HCT116 (cell line): ENCODE measurements at regions of chrX and their contacts with region 1.

Region 1: GRCh38 chrX:103686199-103687072 is at the start of gene MORF4L2:
- DNase-seq: peak; percentile 95
- ATAC-seq: peak; percentile 87
- H3K4me3 ChIP-seq: peak within 1 kb of the TSS; percentile 77 to 80
- H3K27ac ChIP-seq: peak within 1 kb of the TSS; percentile 94
- H3K4me1 ChIP-seq: peaks cover 2 to 17% of the 10 kb centered on the region in 2 experiments; a peak in 3 of 4 replicates
- H3K27me3 ChIP-seq: no peaks in the 10 kb centered on the region
- CTCF ChIP-seq: no peak
- POLR2A ChIP-seq: peak; percentile 65
- RAD21 ChIP-seq: no peak
- total RNA-seq, gene MORF4L2: 308 TPM

Region 2: DNA sequence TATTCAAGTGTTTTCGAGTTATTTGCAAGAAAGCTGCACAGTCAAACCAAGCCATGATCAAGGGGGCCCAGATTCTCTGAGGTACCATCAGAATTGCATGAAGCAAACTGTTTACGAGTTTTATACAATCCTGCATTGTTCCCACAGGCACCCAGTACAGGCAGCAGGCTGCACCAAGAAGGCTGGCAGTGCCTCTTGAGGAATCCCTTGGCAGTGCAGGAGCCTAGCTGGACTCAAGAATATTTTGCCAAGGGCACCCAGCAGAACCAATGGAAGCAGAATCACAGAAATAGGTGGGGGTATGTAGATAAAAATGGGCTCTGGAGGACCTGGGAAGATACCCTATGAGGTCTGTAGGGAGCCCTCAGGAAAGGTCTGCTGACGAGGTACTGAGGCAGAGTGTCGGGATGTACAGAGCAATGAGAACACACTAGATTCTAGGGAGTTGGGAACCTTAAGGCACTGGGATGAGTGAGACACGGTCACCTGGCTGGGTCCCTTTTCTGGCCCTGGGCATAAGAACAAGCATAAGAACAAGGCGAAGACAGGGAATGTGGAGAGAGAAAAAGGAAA is 87.7 kb after region 1 on chrX:
- CTCF ChIA-PET with region 1: no interaction called
- POLR2A ChIA-PET with region 1: no interaction called
- RAD21 ChIA-PET with region 1: no interaction called
- intact Hi-C with region 1: loop called (anchors 1 kb)
- DNase-seq: peak; percentile 8
- ATAC-seq: peak; percentile 86
- H3K4me3 ChIP-seq: no peak overlapping the region
- H3K27ac ChIP-seq: no peak overlapping the region
- H3K4me1 ChIP-seq: no peaks in the 10 kb centered on the region
- H3K27me3 ChIP-seq: peaks cover 18% of the 10 kb centered on the region; the same call in 1 of the 2 replicates
- CTCF ChIP-seq: peak; percentile 42 to 52 (median 48); a peak in 4 of 6 replicates
- POLR2A ChIP-seq: no peak
- RAD21 ChIP-seq: peak; percentile 59

Region 3: DNA sequence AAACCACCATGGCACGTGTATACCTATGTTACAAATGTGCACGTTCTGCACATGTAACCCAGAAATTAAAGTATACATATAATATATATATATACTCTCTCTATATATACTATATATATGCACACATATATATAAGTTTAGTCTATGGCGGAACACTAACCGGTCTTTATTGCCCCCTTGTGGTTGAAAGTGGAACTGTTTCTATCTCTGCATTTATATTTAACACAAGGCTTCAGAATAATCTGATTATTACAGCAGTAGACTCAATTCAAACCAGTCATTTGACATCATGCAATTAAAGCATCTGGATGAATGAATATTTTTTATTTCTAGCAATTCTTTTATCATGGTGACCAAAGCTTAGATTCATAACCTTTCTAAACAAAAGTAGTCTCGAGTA is 131.1 kb after region 1 on chrX:
- CTCF ChIA-PET with region 1: no interaction called
- POLR2A ChIA-PET with region 1: no interaction called
- RAD21 ChIA-PET with region 1: no interaction called
- intact Hi-C with region 1: loop called (anchors 2 kb)
- DNase-seq: peak; percentile 15
- ATAC-seq: peak; percentile 59
- H3K4me3 ChIP-seq: no peak overlapping the region
- H3K27ac ChIP-seq: no peak overlapping the region
- H3K4me1 ChIP-seq: no peaks in the 10 kb centered on the region
- H3K27me3 ChIP-seq: no peaks in the 10 kb centered on the region
- CTCF ChIP-seq: peak; percentile 40 to 44 (median 42); a peak in 4 of 6 replicates
- POLR2A ChIP-seq: no peak
- RAD21 ChIP-seq: peak; percentile 51